Activated CD4-positive, alpha-beta memory T cell treated with anti-CD3 and anti-CD28 coated beads for 36 hours (primary cell): ENCODE measurements at regions of chr18 and their contacts with region 1.

Region 1: GRCh38 chr18:58671111-58671631 is at the start of gene MALT1:
- DNase-seq: peak; percentile 96
- H3K4me3 Mint-ChIP-seq: peak within 1 kb of the TSS; percentile 95
- H3K27ac Mint-ChIP-seq: peak within 1 kb of the TSS; percentile 92
- H3K4me1 Mint-ChIP-seq: peaks cover 59% of the 10 kb centered on the region
- H3K27me3 Mint-ChIP-seq: no peaks in the 10 kb centered on the region
- total RNA-seq, gene MALT1: 42.5 to 44.3 TPM

Region 2: DNA sequence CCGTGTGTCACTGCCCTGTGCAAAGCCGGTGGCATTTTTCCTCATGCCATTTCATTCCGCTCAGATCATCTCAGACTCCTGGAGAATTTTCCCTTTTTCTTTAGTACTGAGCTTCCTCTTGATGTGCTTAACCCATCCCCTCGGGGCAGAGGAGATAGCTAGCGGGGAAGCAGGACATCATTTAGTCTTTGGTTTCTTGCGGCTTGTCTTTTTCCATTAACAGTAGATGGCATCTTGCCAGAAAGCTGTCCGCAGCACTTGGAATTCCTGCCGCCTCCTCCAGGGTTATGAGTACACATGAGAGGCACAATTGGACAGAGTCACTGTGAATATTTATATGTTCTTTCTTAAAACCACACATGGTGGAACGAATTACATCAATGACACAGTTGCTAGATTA is 268.9 kb before region 1 on chr18:
- CTCF ChIA-PET with region 1: no interaction called
- POLR2A ChIA-PET with region 1: no interaction called
- intact Hi-C with region 1: loop called (anchors 2 kb)
- DNase-seq: no peak
- H3K4me3 Mint-ChIP-seq: no peak overlapping the region
- H3K27ac Mint-ChIP-seq: no peak overlapping the region
- H3K4me1 Mint-ChIP-seq: peaks cover 15% of the 10 kb centered on the region
- H3K27me3 Mint-ChIP-seq: peaks cover 2% of the 10 kb centered on the region

Region 3: DNA sequence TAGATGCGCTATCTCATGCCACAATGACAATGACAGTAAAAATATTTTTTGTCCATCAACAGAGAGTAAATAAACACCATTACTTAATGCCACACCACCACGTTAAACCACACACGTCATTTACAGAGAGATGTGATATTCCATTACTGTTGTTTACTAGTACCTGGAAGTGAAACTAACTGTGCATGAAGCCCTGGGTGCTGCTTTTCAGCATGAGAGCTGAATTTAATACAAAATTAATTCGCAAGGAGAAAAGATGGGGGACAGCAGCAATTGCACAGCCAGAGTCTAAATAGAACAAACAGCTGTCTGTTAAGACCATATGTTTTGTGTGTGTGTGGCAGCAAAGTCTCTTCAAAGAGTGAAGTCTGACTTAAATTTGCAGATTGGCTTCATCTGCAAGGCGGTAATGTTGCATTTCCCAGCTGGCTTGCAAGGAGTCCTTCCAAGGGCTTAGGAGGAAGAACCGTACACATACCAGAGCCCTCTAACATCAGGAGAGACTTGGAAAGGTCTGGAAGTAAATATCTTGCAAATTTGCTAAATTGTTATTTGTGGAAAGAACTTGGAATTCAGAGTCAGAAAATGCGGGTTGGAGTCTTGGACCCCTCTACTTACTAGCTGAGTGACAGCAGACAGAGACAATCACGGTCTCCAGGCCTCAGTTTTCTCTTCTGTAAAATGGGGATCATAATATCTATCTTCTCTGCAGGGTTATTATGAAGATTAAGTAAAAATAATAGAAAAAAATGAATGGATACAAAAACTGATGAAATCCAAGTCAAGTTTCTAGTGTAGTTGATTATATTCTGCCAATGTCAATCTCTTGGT is 169.9 kb before region 1 on chr18:
- CTCF ChIA-PET with region 1: no interaction called
- POLR2A ChIA-PET with region 1: no interaction called
- intact Hi-C with region 1: no loop called
- DNase-seq: no peak
- H3K4me3 Mint-ChIP-seq: no peak overlapping the region
- H3K27ac Mint-ChIP-seq: no peak overlapping the region
- H3K4me1 Mint-ChIP-seq: peaks cover 5% of the 10 kb centered on the region
- H3K27me3 Mint-ChIP-seq: peaks cover 8% of the 10 kb centered on the region

Region 4: DNA sequence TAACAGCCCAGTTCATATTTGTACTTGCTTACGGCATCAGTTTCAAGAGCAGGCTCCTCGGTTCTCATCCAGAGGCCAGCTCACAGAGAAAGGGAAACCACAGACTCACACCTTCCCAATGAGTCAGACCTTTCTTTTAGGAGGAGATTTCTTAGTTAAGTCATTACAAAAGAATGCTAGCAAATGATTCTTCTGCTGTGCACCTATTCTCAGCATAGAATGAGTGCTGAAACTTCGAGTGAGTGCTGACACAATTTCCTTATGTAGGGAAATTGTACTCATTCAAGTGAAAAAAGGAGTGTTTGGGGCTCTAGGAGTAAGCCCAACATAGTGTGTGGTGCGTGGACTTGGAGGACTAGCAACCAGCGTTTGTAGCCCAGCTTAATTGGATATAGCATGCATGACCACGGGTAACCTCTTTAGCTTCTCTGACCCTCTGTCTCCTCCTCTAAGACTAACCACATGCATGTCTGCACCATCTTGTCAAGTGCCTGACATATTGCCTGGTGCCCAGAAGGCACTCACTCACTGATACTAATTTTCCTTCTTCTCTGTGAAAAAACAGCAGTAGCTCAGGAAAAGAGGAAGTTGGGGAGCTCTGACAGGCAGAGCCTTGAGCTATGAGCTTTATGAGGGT is 129.3 kb before region 1 on chr18:
- CTCF ChIA-PET with region 1: interaction called, 16 read pairs
- POLR2A ChIA-PET with region 1: interaction called, 34 read pairs
- intact Hi-C with region 1: loop called (anchors 1 kb)
- DNase-seq: peak; percentile 80
- H3K4me3 Mint-ChIP-seq: no peak overlapping the region
- H3K27ac Mint-ChIP-seq: peak overlapping the region; percentile 89
- H3K4me1 Mint-ChIP-seq: peaks cover 80% of the 10 kb centered on the region
- H3K27me3 Mint-ChIP-seq: peaks cover 3% of the 10 kb centered on the region

Region 5: DNA sequence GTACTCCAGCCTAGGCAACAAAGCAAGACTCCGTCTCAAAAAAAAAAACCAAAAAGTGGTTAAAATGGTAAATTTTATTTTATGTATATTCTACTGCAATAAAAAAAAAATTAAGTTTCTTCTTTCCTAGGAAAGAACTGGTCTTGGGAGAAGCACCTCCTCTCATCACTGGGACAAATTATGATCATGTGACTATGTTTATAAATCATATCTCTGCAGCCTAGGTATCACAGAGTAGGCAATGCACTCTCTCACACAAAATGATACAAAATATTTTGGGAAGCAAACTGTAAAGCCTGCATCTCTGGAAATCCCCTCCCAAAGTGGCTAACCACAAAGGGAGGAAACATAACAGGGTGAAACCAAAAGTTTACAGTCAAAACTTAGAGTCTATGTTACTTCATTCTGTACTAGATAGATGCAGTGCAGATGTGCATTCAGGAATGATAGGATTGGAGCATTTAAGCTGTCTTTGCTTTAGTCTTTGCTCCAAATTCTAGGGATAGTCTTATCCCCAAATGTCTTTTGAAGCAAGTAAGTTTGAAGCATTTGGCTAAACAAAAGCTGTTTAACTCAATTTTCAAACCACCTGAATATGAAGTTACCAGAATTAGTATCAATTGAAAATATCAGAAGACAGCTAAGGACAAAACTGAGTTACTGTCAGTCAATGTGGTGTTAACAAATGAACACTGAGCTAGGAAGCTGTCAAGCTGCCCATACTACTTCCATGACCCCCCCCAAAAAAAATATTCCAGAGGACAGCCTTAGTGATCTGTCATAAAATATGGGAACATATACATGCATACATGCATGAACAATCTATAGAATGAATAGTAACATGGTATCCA is 21.0 kb before region 1 on chr18:
- CTCF ChIA-PET with region 1: no interaction called
- POLR2A ChIA-PET with region 1: interaction called, 5 read pairs
- intact Hi-C with region 1: loop called (anchors 1 kb)
- DNase-seq: peak; percentile 44
- H3K4me3 Mint-ChIP-seq: no peak overlapping the region
- H3K27ac Mint-ChIP-seq: peak overlapping the region; percentile 43
- H3K4me1 Mint-ChIP-seq: peaks cover 57% of the 10 kb centered on the region
- H3K27me3 Mint-ChIP-seq: no peaks in the 10 kb centered on the region

Region 6: GRCh38 chr18:58687871-58688308 is 16.7 kb after region 1 on chr18:
- CTCF ChIA-PET with region 1: interaction called, 11 read pairs
- POLR2A ChIA-PET with region 1: interaction called, 38 read pairs
- intact Hi-C with region 1: loop called (anchors 1 kb)
- DNase-seq: peak; percentile 74
- H3K4me3 Mint-ChIP-seq: peak overlapping the region; percentile 63
- H3K27ac Mint-ChIP-seq: peak overlapping the region; percentile 84
- H3K4me1 Mint-ChIP-seq: peaks cover 64% of the 10 kb centered on the region
- H3K27me3 Mint-ChIP-seq: no peaks in the 10 kb centered on the region

Region 7: DNA sequence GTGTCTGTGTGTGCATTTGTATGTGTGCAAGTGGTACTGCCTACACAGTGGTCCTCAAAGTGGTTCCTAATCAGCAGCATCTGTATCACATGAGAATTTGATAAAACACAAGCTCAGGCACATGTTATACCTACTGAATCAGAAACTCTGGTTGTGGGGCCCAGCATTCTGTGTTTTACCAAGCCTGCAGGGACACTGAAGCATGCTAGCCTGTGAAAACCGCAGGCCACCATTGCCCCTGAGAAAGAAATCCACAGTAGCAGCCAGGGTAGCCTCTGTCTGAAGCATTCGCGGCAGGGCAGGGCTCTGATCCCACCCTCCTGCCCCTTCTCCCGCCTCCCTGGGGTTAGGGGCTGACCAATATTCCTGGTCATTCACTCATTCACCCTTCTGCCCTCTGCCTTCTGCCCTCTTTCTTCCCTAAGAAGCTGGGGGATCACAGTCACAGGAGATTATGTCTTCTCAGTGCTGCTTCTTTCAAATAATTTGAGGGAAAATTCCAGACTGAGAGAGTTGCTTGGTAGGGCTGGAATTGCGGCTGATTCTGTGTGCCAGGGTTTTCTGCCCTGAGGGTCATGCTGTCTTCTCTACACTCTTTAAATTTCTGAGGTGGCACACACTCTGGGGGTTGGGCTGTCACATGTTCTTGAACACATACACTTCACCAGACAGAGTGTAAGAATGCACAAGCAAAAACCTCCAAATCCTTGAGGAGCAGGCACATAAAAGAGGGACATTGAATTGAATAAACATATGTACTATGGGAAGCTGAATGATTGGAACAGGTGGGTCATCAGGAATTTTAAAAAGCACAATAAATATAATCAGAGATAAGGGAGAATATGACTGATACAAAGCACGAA is 341.9 kb after region 1 on chr18:
- CTCF ChIA-PET with region 1: no interaction called
- POLR2A ChIA-PET with region 1: no interaction called
- intact Hi-C with region 1: no loop called
- DNase-seq: no peak
- H3K4me3 Mint-ChIP-seq: no peak overlapping the region
- H3K27ac Mint-ChIP-seq: no peak overlapping the region
- H3K4me1 Mint-ChIP-seq: no peaks in the 10 kb centered on the region
- H3K27me3 Mint-ChIP-seq: peaks cover 23% of the 10 kb centered on the region

Region 8: GRCh38 chr18:59139371-59140298 is 468.5 kb after region 1 on chr18 and contains the start of gene SEC11C:
- CTCF ChIA-PET with region 1: interaction called, 4 read pairs
- POLR2A ChIA-PET with region 1: no interaction called
- intact Hi-C with region 1: loop called (anchors 1 kb)
- DNase-seq: peak; percentile 97
- H3K4me3 Mint-ChIP-seq: peak within 1 kb of the TSS; percentile 94
- H3K27ac Mint-ChIP-seq: peak within 1 kb of the TSS; percentile 98
- H3K4me1 Mint-ChIP-seq: peaks cover 38% of the 10 kb centered on the region
- H3K27me3 Mint-ChIP-seq: peaks cover 6% of the 10 kb centered on the region
- total RNA-seq, gene SEC11C: 119 to 130 TPM

Region 9: DNA sequence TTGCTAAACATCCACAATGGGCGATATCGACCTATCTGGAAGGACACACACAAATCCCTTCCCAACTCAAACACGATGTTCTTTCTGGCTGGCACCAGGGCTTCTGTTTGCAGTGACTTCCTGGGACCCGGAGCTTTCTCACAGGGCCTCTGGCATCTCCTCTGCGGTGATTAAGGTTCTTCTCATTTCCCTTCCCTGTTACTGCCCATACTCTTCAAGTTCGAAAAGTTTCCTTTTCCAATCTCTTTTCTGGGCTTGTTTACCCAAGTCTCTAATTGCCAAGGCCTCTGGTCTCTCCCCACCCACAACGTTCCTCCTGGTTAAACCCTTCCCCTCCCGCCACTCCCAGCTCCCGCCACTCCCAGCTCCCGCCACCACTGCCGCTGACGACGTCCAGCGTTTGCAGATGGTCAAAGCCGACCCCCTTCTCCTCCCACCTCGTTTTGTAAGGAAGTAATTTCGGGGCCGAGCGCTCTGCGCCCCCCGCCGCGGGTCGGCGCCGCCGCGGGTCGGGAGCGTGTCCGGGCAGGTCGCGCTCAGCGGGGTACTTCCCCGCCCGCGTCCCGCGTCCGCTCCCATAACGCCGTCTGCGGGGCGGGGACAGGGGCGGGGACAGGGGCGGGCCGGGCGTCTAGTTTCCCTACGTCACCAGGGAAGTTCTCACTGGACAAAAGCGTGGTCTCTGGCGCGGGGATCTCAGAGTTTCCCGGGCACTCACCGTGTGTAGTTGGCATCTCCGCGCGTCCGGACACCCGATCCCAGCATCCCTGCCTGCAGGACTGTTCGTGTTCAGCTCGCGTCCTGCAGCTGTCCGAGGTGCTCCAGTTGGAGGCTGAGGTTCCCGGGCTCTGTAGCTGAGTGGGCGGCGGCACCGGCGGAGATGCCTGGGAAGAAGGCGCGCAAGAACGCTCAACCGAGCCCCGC is 1228.4 kb after region 1 on chr18 and contains the start of gene PMAIP1:
- CTCF ChIA-PET with region 1: no interaction called
- POLR2A ChIA-PET with region 1: no interaction called
- intact Hi-C with region 1: loop called (anchors 10 kb)
- DNase-seq: peak; percentile 94
- H3K4me3 Mint-ChIP-seq: peak within 1 kb of the TSS; percentile 96
- H3K27ac Mint-ChIP-seq: peak within 1 kb of the TSS; percentile 99
- H3K4me1 Mint-ChIP-seq: peaks cover 31% of the 10 kb centered on the region
- H3K27me3 Mint-ChIP-seq: no peaks in the 10 kb centered on the region
- total RNA-seq, gene PMAIP1: 97.6 to 104 TPM